ENCODE measurements at regions of chr10 and their contacts with region 1.

Region 1: DNA sequence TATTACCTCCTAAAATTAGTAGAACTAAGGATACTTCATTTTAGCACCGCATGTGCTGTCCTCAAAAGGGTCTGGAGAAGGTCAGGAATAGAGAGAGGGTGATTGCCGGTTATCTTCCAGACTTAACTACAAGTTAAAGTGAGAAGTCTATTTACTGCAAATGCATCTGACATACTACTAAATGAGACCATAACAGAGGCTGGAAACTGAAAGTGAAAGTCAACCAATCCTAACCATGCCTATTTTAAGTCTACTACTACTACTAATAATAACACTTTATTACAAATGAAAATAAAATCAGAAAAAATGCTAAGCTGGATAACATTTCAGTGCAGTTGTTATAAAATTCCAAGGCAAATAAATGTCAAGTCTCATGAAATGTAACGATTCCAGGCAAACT is 244.7 kb downstream of the KIF20B start:
- DNase-seq: no peak
- H3K4me3 ChIP-seq: no peak overlapping the region
- H3K27ac ChIP-seq: no peak overlapping the region
- H3K4me1 ChIP-seq: no peaks in the 10 kb centered on the region
- H3K27me3 ChIP-seq: peaks cover 29% of the 10 kb centered on the region
- CTCF ChIP-seq: no peak

Region 2: DNA sequence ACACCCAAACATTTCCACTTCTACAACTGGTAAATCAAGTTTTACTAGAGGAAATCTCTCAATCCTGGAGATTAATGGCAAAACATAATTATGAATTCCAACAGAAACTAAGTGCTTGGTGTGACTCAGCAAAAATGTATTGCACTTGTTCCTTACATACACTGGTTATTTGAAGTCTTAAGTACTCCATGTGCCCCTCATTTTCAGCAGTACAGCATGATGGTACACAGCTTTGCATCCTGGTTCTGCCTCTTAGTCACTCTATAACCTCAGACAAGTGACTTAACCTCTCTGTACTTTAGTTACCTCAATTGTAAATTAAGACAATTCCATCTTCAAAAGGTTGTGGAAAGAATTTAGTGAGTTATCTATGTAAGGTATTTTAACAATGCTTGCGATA is 423.6 kb before region 1 on chr10:
- CTCF ChIA-PET with region 1: no interaction called
- POLR2A ChIA-PET with region 1: no interaction called
- intact Hi-C with region 1: no loop called
- DNase-seq: no peak
- H3K4me3 ChIP-seq: no peak overlapping the region
- H3K27ac ChIP-seq: no peak overlapping the region
- H3K4me1 ChIP-seq: peaks cover 51% of the 10 kb centered on the region
- H3K27me3 ChIP-seq: no peaks in the 10 kb centered on the region
- CTCF ChIP-seq: no peak

Region 3: GRCh38 chr10:89921422-89921821 is 24.7 kb before region 1 on chr10:
- CTCF ChIA-PET with region 1: interaction called, 10 read pairs
- POLR2A ChIA-PET with region 1: no interaction called
- intact Hi-C with region 1: no loop called
- DNase-seq: no peak
- H3K4me3 ChIP-seq: no peak overlapping the region
- H3K27ac ChIP-seq: no peak overlapping the region
- H3K4me1 ChIP-seq: no peaks in the 10 kb centered on the region
- H3K27me3 ChIP-seq: peaks cover 28% of the 10 kb centered on the region
- CTCF ChIP-seq: no peak

Region 4: DNA sequence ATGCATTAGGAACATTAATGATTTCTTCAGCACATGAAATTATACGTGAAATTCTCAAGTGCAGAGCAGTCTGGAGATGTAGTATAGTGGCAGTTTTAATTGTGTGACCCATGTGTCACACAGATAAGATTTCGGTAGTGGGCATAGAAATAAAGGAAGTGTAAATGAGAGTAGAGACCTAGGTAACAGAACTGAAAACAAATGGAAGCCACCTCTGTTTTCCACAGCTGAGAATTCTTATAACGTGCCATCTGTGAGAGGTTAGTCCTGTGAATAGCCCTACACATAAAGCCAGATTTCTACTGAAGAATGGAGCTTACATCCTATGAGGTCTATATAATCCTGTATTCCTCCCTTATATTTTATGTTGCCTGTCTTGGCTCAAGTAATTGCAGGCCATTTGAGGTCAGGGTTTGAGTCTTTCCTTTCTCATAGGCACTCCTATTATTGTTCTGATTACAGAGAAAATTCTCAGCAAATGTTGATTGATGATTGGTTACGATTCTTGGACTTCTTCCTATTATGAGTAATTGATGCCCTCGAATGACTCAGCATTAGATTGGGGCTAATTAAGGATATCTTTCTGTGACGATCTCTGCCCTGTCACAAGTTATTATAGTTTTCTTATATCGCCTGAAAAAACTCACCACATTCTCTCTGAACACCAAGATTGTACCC is 13.5 kb after region 1 on chr10:
- CTCF ChIA-PET with region 1: no interaction called
- POLR2A ChIA-PET with region 1: no interaction called
- intact Hi-C with region 1: no loop called
- DNase-seq: no peak
- H3K4me3 ChIP-seq: no peak overlapping the region
- H3K27ac ChIP-seq: no peak overlapping the region
- H3K4me1 ChIP-seq: no peaks in the 10 kb centered on the region
- H3K27me3 ChIP-seq: peaks cover 26% of the 10 kb centered on the region
- CTCF ChIP-seq: no peak